Activated CD4-positive, alpha-beta memory T cell treated with anti-CD3 and anti-CD28 coated beads, Interleukin-2, amount 10 ng/mL, durations not matched to agents 7 days and 5 days (primary cell): ENCODE measurements at regions of chrX and their contacts with region 1.

Region 1: GRCh38 chrX:140918407-140919038 is 83.9 kb upstream of the SPANXB1 start:
- DNase-seq: peak; percentile 51
- H3K4me3 Mint-ChIP-seq: no peak overlapping the region
- H3K27ac Mint-ChIP-seq: peak overlapping the region; percentile 93
- H3K4me1 Mint-ChIP-seq: peaks cover 32% of the 10 kb centered on the region
- H3K27me3 Mint-ChIP-seq: no peaks in the 10 kb centered on the region

Region 2: DNA sequence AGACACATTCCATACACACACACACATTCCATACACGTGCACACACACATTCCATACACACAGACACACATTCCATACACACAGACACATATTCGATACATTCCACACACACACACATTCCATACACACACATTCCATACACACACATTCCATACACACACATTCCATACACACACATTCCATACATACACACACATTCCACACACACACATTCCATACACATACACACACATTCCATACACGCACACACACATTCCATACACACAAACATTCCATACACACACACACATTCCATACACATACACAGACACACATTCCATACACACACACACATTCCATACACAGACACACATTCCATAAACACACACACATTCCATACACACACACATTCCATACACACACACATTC is 195.3 kb before region 1 on chrX:
- CTCF ChIA-PET with region 1: no interaction called
- POLR2A ChIA-PET with region 1: no interaction called
- DNase-seq: no peak
- H3K4me3 Mint-ChIP-seq: no peak overlapping the region
- H3K27ac Mint-ChIP-seq: no peak overlapping the region
- H3K4me1 Mint-ChIP-seq: no peaks in the 10 kb centered on the region
- H3K27me3 Mint-ChIP-seq: no peaks in the 10 kb centered on the region

Region 3: DNA sequence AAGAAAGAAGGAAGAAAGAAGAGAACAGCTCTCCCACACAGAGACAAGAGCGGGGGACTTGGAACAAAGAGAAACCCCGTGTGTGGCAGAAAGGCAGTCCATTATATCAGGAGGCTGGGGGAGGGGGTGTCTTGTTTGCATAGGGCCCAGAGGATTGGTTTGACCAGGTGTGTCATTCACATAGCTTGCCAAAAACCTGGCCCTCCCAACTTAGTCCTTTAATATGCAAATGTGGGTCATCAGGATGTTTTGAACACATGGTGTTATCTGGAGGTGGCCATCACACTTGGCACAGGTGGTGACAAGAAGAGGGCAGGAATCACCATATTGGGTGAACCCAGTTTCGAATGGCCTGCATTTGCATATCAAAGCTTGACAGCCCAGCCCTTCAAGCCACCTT is 97.2 kb before region 1 on chrX:
- CTCF ChIA-PET with region 1: no interaction called
- POLR2A ChIA-PET with region 1: interaction called, 11 read pairs
- DNase-seq: no peak
- H3K4me3 Mint-ChIP-seq: no peak overlapping the region
- H3K27ac Mint-ChIP-seq: peak overlapping the region; percentile 45
- H3K4me1 Mint-ChIP-seq: peaks cover 29% of the 10 kb centered on the region
- H3K27me3 Mint-ChIP-seq: no peaks in the 10 kb centered on the region